ENCODE measurements at regions of chr7 and their contacts with region 1.

Region 1: GRCh38 chr7:151341357-151342101 is at the start of gene NUB1:
- DNase-seq: peak; percentile 72 to 94
- H3K4me3 ChIP-seq: peak within 1 kb of the TSS; percentile 81 to 83
- H3K27ac ChIP-seq: peak within 1 kb of the TSS; percentile 64 to 88
- H3K4me1 ChIP-seq: peaks cover 8 to 15% of the 10 kb centered on the region in 2 donors
- H3K27me3 ChIP-seq: no peaks in the 10 kb centered on the region
- CTCF ChIP-seq: peak in 1 of 3 experiments; percentile 4
- total RNA-seq, gene NUB1: 28.2 TPM

Region 2: GRCh38 chr7:151080522-151081169 is 260.9 kb before region 1 on chr7 and contains the start of gene FASTK:
- intact Hi-C with region 1: loop called (anchors 2 kb)
- DNase-seq: peak; percentile 84 to 95
- H3K4me3 ChIP-seq: peak within 1 kb of the TSS; percentile 75 to 87
- H3K27ac ChIP-seq: peak within 1 kb of the TSS; percentile 95 to 96
- H3K4me1 ChIP-seq: peaks cover 24 to 35% of the 10 kb centered on the region in 2 donors
- H3K27me3 ChIP-seq: no peaks in the 10 kb centered on the region
- CTCF ChIP-seq: no peak
- total RNA-seq, gene FASTK: 121 TPM

Region 3: GRCh38 chr7:151226875-151227782 is 114.4 kb before region 1 on chr7 and contains the start of gene ABCF2:
- intact Hi-C with region 1: loop called (anchors 1 kb)
- DNase-seq: peak; percentile 98 to 100
- H3K4me3 ChIP-seq: peak within 1 kb of the TSS; percentile 79 to 94
- H3K27ac ChIP-seq: peak within 1 kb of the TSS; percentile 63 to 72
- H3K4me1 ChIP-seq: peaks cover 7 to 12% of the 10 kb centered on the region in 2 donors
- H3K27me3 ChIP-seq: no peaks in the 10 kb centered on the region
- CTCF ChIP-seq: no peak
- total RNA-seq, gene ABCF2: 85.3 TPM

Region 4: GRCh38 chr7:151232091-151232916 is 109.2 kb before region 1 on chr7 and contains the start of gene CHPF2:
- intact Hi-C with region 1: loop called (anchors 1 kb)
- DNase-seq: peak; percentile 72 to 95
- H3K4me3 ChIP-seq: peak within 1 kb of the TSS; percentile 91 to 99
- H3K27ac ChIP-seq: peak within 1 kb of the TSS; percentile 93
- H3K4me1 ChIP-seq: peaks cover 7 to 8% of the 10 kb centered on the region in 2 donors
- H3K27me3 ChIP-seq: no peaks in the 10 kb centered on the region
- CTCF ChIP-seq: no peak
- total RNA-seq, gene CHPF2: 40.3 TPM

Region 5: GRCh38 chr7:151876899-151877777 is 535.6 kb after region 1 on chr7 and contains the start of gene PRKAG2:
- intact Hi-C with region 1: loop called (anchors 10 kb)
- DNase-seq: peak in 1 of 2 donors; percentile 87
- H3K4me3 ChIP-seq: peak within 1 kb of the TSS; percentile 93 to 95
- H3K27ac ChIP-seq: peak within 1 kb of the TSS; percentile 76 to 78
- H3K4me1 ChIP-seq: peaks cover 5 to 18% of the 10 kb centered on the region in 2 donors
- H3K27me3 ChIP-seq: no peaks in the 10 kb centered on the region
- CTCF ChIP-seq: peak in 1 of 3 experiments; percentile 3
- total RNA-seq, gene PRKAG2: 26.7 TPM